Left ventricle myocardium superior (tissue), 1 donor: ENCODE measurements at regions of chr13 and their contacts with region 1.

Region 1: GRCh38 chr13:46126552-46127357 is 21.9 kb upstream of the CPB2 start:
- DNase-seq: peak; percentile 81
- ATAC-seq: peak; percentile 91

Region 2: GRCh38 chr13:45269204-45269603 is 857.6 kb before region 1 on chr13:
- intact Hi-C with region 1: no loop called
- DNase-seq: no peak
- ATAC-seq: no peak

Region 3: DNA sequence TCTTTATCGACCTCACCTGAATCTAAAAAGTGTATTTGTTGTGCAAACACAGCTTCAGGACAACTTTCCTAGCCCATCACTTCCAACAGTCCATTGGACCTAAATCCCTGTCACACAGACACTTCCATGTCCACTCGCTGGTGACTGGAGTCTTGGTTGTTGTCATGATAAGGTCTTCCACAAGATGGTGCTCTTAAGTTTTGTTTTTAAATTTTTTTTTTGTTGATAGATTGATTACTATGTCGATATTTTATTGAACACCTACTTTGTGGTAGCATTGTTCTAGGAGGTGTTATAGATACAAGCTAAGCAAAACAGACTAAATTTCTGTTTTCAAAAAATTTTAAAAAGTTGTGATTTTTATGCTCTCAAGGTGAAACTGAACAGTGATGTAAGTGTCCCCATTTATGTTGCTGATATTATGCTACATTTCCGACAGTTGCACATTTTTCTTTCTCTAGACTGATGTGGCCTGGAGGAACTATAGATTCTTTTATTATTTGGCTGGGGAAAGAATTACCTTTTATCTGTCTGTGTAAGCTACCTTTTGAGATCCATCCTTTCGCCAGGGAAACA is 503.2 kb before region 1 on chr13:
- intact Hi-C with region 1: loop called (anchors 10 kb)
- DNase-seq: no peak
- ATAC-seq: no peak